ENCODE measurements at regions of chr1 and their contacts with region 1.

Region 1: GRCh38 chr1:20696397-20697329 is 21.1 kb downstream of the KIF17 start:
- DNase-seq: peak; percentile 89
- ATAC-seq: peak; percentile 91
- H3K4me3 ChIP-seq: peak overlapping the region; percentile 72
- H3K27ac ChIP-seq: peak overlapping the region; percentile 78
- H3K4me1 ChIP-seq: peaks cover 22% of the 10 kb centered on the region
- H3K27me3 ChIP-seq: no peaks in the 10 kb centered on the region
- CTCF ChIP-seq: peak; percentile 80

Region 2: GRCh38 chr1:20654104-20654690 is 42.5 kb before region 1 on chr1:
- CTCF ChIA-PET with region 1: no interaction called
- POLR2A ChIA-PET with region 1: no interaction called
- intact Hi-C with region 1: no loop called
- DNase-seq: no peak
- ATAC-seq: no peak; the same call in 1 of the 2 replicates
- H3K4me3 ChIP-seq: no peak overlapping the region
- H3K27ac ChIP-seq: no peak overlapping the region
- H3K4me1 ChIP-seq: no peaks in the 10 kb centered on the region
- H3K27me3 ChIP-seq: no peaks in the 10 kb centered on the region
- CTCF ChIP-seq: no peak

Region 3: DNA sequence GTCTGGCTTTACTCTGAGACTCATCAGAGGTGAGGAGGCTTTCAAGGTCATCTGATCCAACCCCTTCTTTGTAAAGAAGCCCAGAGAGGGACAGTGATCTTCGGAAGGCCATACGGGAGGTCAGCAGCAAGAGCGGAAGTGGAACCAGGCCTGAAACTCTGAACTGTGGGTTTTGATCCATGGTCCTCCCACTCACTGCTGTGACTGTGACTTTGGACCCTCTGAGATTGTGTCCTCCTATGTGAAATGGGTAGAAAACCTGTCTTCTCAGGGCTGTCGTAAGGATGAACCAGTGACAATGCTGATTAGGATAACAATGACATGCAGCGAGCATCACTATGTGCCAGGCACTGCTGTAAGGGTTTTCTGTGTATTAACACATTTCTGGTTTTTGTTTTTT is 25.7 kb before region 1 on chr1:
- CTCF ChIA-PET with region 1: no interaction called
- POLR2A ChIA-PET with region 1: no interaction called
- intact Hi-C with region 1: no loop called
- DNase-seq: no peak
- ATAC-seq: no peak
- H3K4me3 ChIP-seq: no peak overlapping the region
- H3K27ac ChIP-seq: no peak overlapping the region
- H3K4me1 ChIP-seq: no peaks in the 10 kb centered on the region
- H3K27me3 ChIP-seq: no peaks in the 10 kb centered on the region
- CTCF ChIP-seq: no peak

Region 4: DNA sequence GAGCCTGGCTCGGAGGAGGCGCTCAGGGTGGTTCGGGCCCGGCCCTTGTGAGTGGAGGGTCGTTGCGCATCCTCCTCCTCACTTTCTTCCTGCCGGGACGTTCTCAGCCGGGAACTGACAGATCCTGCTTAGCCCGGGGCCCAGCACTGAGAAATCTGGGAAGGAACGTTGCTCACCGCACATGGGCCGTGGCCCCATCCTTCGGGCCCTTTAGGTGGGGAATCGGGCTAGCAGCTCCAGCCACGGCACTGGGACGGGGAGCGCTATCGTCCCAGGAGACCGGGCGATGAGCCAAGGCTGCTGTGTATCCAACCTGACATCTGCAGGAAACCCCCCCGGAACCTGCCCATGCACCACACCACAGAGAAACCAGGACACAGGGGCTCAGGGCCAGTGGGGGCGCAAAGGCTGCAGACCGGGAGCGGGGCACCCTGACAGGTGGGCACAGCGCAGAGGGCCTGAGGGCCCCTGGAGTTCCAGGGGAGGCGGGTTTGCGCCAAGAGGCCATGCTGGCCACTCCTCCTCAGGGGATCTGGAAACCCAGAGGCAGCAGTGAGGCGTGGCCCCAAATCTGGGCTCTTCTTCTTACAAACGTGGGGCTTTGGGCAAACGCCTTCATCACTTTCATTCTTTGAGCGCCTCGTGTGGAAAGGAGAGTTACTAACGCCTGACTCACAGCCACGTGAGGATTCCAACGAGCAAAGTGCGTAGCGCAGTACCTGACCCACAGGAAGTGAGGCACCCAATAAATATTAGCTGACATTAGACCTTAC is 36.1 kb after region 1 on chr1 and contains the start of gene SH2D5:
- CTCF ChIA-PET with region 1: interaction called, 10 read pairs
- POLR2A ChIA-PET with region 1: no interaction called
- intact Hi-C with region 1: loop called (anchors 2 kb)
- DNase-seq: peak; percentile 99
- ATAC-seq: peak; percentile 71
- H3K4me3 ChIP-seq: peak within 1 kb of the TSS; percentile 74
- H3K27ac ChIP-seq: peak within 1 kb of the TSS; percentile 97
- H3K4me1 ChIP-seq: peaks cover 22% of the 10 kb centered on the region
- H3K27me3 ChIP-seq: no peaks in the 10 kb centered on the region
- CTCF ChIP-seq: peak; percentile 44; the same call in 1 of the 2 replicates
- total RNA-seq, gene SH2D5: 7.1 and 11.2 TPM in 2 replicates

Region 5: GRCh38 chr1:20739225-20739624 is 42.6 kb after region 1 on chr1:
- CTCF ChIA-PET with region 1: interaction called, 11 read pairs
- POLR2A ChIA-PET with region 1: no interaction called
- intact Hi-C with region 1: no loop called
- DNase-seq: peak; percentile 81
- ATAC-seq: peak; percentile 72
- H3K4me3 ChIP-seq: no peak overlapping the region
- H3K27ac ChIP-seq: peak overlapping the region; percentile 95
- H3K4me1 ChIP-seq: peaks cover 35% of the 10 kb centered on the region
- H3K27me3 ChIP-seq: no peaks in the 10 kb centered on the region
- CTCF ChIP-seq: no peak

Region 6: GRCh38 chr1:20850021-20850420 is 153.4 kb after region 1 on chr1:
- CTCF ChIA-PET with region 1: no interaction called
- POLR2A ChIA-PET with region 1: no interaction called
- intact Hi-C with region 1: no loop called
- DNase-seq: no peak
- ATAC-seq: no peak
- H3K4me3 ChIP-seq: no peak overlapping the region
- H3K27ac ChIP-seq: no peak overlapping the region
- H3K4me1 ChIP-seq: peaks cover 28% of the 10 kb centered on the region
- H3K27me3 ChIP-seq: no peaks in the 10 kb centered on the region
- CTCF ChIP-seq: no peak

Region 7: DNA sequence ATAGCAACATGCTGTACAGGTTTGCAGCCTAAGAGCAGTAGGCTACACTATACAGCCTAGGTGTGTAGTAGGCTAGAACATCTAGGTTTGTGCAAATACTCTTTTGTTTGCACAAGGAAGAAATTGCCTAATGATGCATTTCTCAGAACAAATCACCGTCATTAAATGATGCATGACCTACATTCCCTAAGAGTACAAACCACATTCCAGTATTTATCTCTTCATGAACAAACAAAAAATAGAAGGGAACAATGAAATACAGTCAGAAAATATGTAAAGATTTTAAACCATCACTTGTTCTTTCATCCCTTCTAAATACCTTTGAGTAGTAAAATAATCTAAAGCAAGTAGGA is 200.2 kb after region 1 on chr1:
- CTCF ChIA-PET with region 1: no interaction called
- POLR2A ChIA-PET with region 1: no interaction called
- intact Hi-C with region 1: loop called (anchors 5 kb)
- DNase-seq: peak; percentile 91
- ATAC-seq: peak; percentile 97
- H3K4me3 ChIP-seq: no peak overlapping the region
- H3K27ac ChIP-seq: peak overlapping the region; percentile 86
- H3K4me1 ChIP-seq: peaks cover 15% of the 10 kb centered on the region
- H3K27me3 ChIP-seq: no peaks in the 10 kb centered on the region
- CTCF ChIP-seq: no peak

Region 8: GRCh38 chr1:20981915-20982314 is 285.3 kb after region 1 on chr1:
- CTCF ChIA-PET with region 1: no interaction called
- POLR2A ChIA-PET with region 1: no interaction called
- intact Hi-C with region 1: loop called (anchors 10 kb)
- DNase-seq: peak; percentile 55
- ATAC-seq: peak; percentile 67
- H3K4me3 ChIP-seq: no peak overlapping the region
- H3K27ac ChIP-seq: no peak overlapping the region
- H3K4me1 ChIP-seq: peaks cover 7% of the 10 kb centered on the region; the same call in 1 of the 2 replicates
- H3K27me3 ChIP-seq: no peaks in the 10 kb centered on the region
- CTCF ChIP-seq: peak; percentile 63

Region 9: GRCh38 chr1:21176586-21177555 is 480.2 kb after region 1 on chr1 and contains the start of gene EIF4G3:
- CTCF ChIA-PET with region 1: no interaction called
- POLR2A ChIA-PET with region 1: no interaction called
- intact Hi-C with region 1: no loop called
- DNase-seq: peak; percentile 99
- ATAC-seq: peak; percentile 97
- H3K4me3 ChIP-seq: peak within 1 kb of the TSS; percentile 91
- H3K27ac ChIP-seq: no peak within 1 kb of the TSS; the same call in 1 of the 2 replicates
- H3K4me1 ChIP-seq: peaks cover 13% of the 10 kb centered on the region
- H3K27me3 ChIP-seq: no peaks in the 10 kb centered on the region
- CTCF ChIP-seq: no peak
- total RNA-seq, gene EIF4G3: 16.9 and 25.0 TPM in 2 replicates

Region 10: GRCh38 chr1:21200767-21201166 is 504.1 kb after region 1 on chr1:
- CTCF ChIA-PET with region 1: interaction called, 22 read pairs
- POLR2A ChIA-PET with region 1: no interaction called
- intact Hi-C with region 1: loop called (anchors 1 kb)
- DNase-seq: peak; percentile 15
- ATAC-seq: no peak
- H3K4me3 ChIP-seq: no peak overlapping the region
- H3K27ac ChIP-seq: no peak overlapping the region
- H3K4me1 ChIP-seq: no peaks in the 10 kb centered on the region
- H3K27me3 ChIP-seq: no peaks in the 10 kb centered on the region
- CTCF ChIP-seq: no peak

Measured in PC-3 (cell line).